GM12878 (cell line): ENCODE measurements at regions of chr1 and their contacts with region 1.

Region 1: DNA sequence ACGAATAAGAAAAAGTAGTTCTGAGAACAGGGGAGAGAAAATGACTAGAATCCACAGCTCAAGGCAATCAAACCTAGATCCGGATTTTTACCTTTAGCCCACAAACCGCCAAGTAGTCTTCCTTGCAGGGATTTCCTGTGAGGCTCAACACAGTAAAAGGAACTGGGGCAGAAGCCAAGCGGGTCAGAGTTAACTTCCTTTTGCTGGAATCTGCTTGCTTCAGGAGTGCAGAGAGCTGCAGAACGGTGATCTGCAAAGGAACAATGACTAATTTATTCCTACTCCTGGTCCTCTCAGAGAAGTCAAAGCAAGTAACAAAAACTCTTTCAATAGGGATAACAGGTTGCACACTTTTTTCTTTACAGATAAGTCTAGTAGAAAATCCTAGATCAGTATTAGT is 53.4 kb downstream of the UBR4 start:
- DNase-seq: no peak
- ATAC-seq: no peak
- H3K4me3 ChIP-seq: no peak overlapping the region
- H3K27ac ChIP-seq: no peak overlapping the region
- H3K4me1 ChIP-seq: no peaks in the 10 kb centered on the region
- H3K27me3 ChIP-seq: no peaks in the 10 kb centered on the region
- CTCF ChIP-seq: no peak
- EP300 ChIP-seq: no peak
- POLR2A ChIP-seq: no peak
- RAD21 ChIP-seq: no peak

Region 2: GRCh38 chr1:18805925-18806849 is 350.5 kb before region 1 on chr1:
- CTCF ChIA-PET with region 1: no interaction called
- POLR2A ChIA-PET with region 1: no interaction called
- RAD21 ChIA-PET with region 1: no interaction called
- SMC1A ChIA-PET with region 1: no interaction called
- in situ Hi-C with region 1: no loop called
- intact Hi-C with region 1: no loop called
- DNase-seq: no peak
- ATAC-seq: no peak
- H3K4me3 ChIP-seq: no peak overlapping the region
- H3K27ac ChIP-seq: no peak overlapping the region
- H3K4me1 ChIP-seq: no peaks in the 10 kb centered on the region
- H3K27me3 ChIP-seq: peaks cover 0 to 1% of the 10 kb centered on the region in 2 experiments; a peak in 3 of 4 replicates
- CTCF ChIP-seq: no peak
- EP300 ChIP-seq: no peak
- POLR2A ChIP-seq: no peak
- RAD21 ChIP-seq: no peak

Region 3: GRCh38 chr1:19240673-19241538 is 84.2 kb after region 1 on chr1:
- CTCF ChIA-PET with region 1: no interaction called
- POLR2A ChIA-PET with region 1: no interaction called
- RAD21 ChIA-PET with region 1: no interaction called
- SMC1A ChIA-PET with region 1: no interaction called
- in situ Hi-C with region 1: no loop called
- intact Hi-C with region 1: loop called (anchors 10 kb)
- DNase-seq: no peak
- ATAC-seq: peak; percentile 97
- H3K4me3 ChIP-seq: no peak overlapping the region
- H3K27ac ChIP-seq: no peak overlapping the region
- H3K4me1 ChIP-seq: no peaks in the 10 kb centered on the region
- H3K27me3 ChIP-seq: no peaks in the 10 kb centered on the region
- CTCF ChIP-seq: peak; percentile 89 to 96 (median 94)
- EP300 ChIP-seq: no peak
- POLR2A ChIP-seq: no peak
- RAD21 ChIP-seq: peak; percentile 73

Region 4: GRCh38 chr1:19640363-19641316 is 484.0 kb after region 1 on chr1:
- CTCF ChIA-PET with region 1: no interaction called
- POLR2A ChIA-PET with region 1: no interaction called
- RAD21 ChIA-PET with region 1: no interaction called
- SMC1A ChIA-PET with region 1: no interaction called
- in situ Hi-C with region 1: no loop called
- intact Hi-C with region 1: no loop called
- DNase-seq: no peak
- ATAC-seq: no peak; the same call in 2 of the 3 replicates
- H3K4me3 ChIP-seq: no peak overlapping the region
- H3K27ac ChIP-seq: no peak overlapping the region
- H3K4me1 ChIP-seq: peaks cover 3% of the 10 kb centered on the region; the same call in 1 of the 2 replicates
- H3K27me3 ChIP-seq: peaks cover 2 to 6% of the 10 kb centered on the region in 2 experiments
- CTCF ChIP-seq: no peak
- EP300 ChIP-seq: no peak
- POLR2A ChIP-seq: no peak
- RAD21 ChIP-seq: no peak